ENCODE measurements at regions of chr9 and their contacts with region 1.

Region 1: DNA sequence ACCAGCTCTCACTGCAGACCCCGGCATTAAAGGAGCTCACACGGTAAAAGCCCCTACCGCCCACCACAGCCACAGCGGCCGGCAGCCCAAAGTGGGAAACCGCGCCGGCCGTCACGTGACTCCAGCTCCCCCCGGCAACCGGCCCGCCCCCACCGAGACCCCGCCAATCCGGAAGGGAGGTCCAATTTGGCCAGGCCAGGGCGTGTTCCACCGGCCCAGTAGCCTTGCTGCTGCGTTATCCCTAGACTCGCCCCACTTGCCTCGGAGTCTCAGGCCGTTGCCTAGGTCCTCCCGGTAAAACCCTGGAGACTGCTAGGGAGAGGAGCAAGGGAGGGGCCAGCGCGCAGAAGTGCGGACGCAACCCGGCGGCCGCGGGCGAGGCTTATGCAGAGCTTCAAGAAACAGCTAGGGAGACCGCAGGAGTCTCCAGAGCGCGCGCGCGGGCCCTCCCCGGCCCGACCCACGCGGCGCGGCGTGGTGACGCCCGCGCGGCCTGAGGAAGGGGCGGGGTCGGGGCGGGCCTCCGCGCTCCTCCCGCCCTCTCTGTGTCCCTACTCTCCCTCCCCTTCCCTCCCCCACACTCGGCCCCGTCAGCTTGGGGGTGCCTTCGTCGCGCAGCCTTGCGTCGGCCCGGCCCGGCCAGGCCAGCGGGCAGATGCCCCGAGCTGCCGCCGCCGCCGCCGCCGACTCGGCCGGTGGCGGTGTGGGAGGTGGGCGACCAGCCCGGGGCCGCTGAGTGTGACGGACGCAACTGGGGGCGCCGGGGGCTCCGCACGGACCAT is at the start of gene RIC1:
- DNase-seq: peak; percentile 90
- H3K4me3 Mint-ChIP-seq: peak within 1 kb of the TSS; percentile 99
- H3K27ac Mint-ChIP-seq: peak within 1 kb of the TSS; percentile 100
- H3K4me1 Mint-ChIP-seq: peaks cover 59% of the 10 kb centered on the region
- H3K27me3 Mint-ChIP-seq: no peaks in the 10 kb centered on the region
- total RNA-seq, gene RIC1: 14.5 to 16.4 TPM

Region 2: GRCh38 chr9:4832786-4833579 is 795.7 kb before region 1 on chr9:
- CTCF ChIA-PET with region 1: no interaction called
- intact Hi-C with region 1: loop called (anchors 10 kb)
- DNase-seq: peak; percentile 80
- H3K4me3 Mint-ChIP-seq: no peak overlapping the region
- H3K27ac Mint-ChIP-seq: peak overlapping the region; percentile 85
- H3K4me1 Mint-ChIP-seq: peaks cover 46% of the 10 kb centered on the region
- H3K27me3 Mint-ChIP-seq: no peaks in the 10 kb centered on the region

Region 3: DNA sequence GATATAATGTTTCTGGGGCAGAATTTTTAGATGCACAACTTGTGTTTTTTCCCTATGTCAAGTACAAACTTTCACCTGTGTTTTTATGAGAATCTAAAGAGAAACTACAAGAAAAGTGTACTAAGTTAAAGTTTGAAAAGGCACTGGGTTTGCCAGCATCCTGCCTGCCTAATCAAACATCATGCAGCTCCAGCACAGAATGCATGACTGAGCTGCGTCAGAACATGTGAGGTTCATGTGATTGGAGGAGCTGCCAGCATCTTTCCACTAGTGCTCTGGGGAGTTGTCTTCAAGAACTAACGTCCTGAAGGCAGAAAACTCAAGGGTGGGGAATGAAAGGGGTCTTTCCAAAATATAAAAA is 45.9 kb before region 1 on chr9:
- CTCF ChIA-PET with region 1: interaction called, 5 read pairs
- intact Hi-C with region 1: loop called (anchors 1 kb)
- DNase-seq: peak; percentile 72
- H3K4me3 Mint-ChIP-seq: peak overlapping the region; percentile 27
- H3K27ac Mint-ChIP-seq: peak overlapping the region; percentile 78
- H3K4me1 Mint-ChIP-seq: peaks cover 66% of the 10 kb centered on the region
- H3K27me3 Mint-ChIP-seq: no peaks in the 10 kb centered on the region

Region 4: GRCh38 chr9:5714501-5715401 is 86.0 kb after region 1 on chr9:
- CTCF ChIA-PET with region 1: no interaction called
- intact Hi-C with region 1: loop called (anchors 2 kb)
- DNase-seq: no peak
- H3K4me3 Mint-ChIP-seq: no peak overlapping the region
- H3K27ac Mint-ChIP-seq: no peak overlapping the region
- H3K4me1 Mint-ChIP-seq: peaks cover 14% of the 10 kb centered on the region
- H3K27me3 Mint-ChIP-seq: no peaks in the 10 kb centered on the region

Region 5: DNA sequence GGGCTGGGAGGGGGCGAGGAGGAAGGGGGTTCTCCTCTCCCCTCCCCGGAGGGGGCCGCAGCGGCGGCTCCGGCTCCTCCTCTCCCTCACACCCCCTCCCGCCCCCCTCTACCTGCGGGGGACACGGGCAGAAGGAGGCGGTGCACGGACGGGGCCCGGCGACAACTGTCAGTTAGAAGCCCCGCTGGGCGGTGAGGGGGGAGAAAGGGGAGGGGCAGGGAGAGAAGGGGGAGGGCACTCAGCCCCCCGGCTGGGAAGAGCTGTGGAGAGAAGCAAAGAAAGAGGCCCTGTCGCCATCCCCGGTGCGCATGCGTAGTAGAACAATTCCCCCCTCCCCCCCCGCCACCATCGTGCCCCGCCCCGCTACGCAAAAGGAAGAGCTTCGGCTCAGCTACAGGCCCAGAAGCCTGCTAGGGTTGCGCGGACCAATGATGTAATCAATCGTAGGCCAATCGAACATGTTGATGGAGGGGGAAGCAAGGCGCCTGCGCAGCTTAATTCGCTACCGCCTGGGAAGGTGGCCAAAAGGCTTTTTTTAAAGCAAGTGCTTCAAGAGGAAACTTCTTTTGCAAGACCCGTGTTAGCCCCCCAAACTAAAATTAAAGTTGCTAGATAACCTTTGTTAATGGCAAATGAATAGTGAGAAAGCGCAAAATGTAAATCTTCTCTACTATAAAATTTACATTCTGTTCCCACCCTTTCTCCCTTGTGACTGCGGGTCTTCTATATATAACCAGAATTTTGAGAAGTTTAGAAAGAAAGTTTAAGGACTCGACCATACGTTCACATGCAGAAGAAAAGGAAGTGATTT is 379.7 kb after region 1 on chr9:
- CTCF ChIA-PET with region 1: no interaction called
- intact Hi-C with region 1: loop called (anchors 1 kb)
- DNase-seq: peak; percentile 98
- H3K4me3 Mint-ChIP-seq: peak overlapping the region; percentile 76
- H3K27ac Mint-ChIP-seq: peak overlapping the region; percentile 82
- H3K4me1 Mint-ChIP-seq: peaks cover 61% of the 10 kb centered on the region
- H3K27me3 Mint-ChIP-seq: no peaks in the 10 kb centered on the region